ENCODE measurements at regions of chr3 and their contacts with region 1.

Region 1: DNA sequence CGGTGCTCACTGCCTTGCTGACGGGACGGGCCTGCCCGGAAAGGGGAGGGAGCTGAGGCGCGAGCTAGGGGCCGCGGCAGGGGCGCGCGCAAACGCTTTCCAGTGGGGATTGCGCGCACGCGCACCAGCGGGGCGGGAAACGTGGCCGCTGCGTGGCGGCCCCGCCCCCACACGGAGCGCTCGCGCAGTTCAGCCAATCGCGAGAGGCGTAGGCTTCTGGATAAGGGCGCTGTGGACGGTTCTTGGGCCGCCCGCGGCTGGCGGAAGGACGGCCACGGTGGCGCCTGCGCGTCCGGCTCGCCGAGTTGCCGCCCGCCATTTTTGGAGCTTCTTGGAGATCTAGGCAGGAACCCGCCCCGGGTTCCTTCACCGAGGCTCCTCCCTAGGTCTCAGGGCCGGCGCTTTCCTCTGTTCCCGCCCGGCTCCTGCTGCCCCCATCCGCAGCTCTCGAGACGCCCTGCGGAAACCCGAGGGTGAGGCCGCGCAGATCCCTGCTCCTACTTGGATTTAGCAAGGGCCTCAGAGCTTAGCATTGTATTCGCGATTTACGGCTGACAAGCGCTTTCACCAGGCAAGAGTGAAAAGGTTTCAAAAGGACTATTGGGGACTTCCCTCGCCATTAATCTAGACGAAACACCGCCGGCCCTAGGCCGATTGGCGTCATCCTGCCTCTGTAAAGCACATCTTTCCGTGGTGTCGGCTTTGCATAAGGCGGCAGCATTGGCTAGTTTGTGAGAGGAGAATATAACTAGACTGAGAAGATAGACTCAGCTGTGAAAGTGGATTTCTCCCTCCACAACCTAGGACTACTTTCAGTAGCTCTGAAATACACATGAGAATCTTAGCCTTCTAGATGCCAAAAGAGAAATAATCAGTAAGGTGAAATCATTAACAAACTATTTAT is 496 bp upstream of the STAG1 start:
- DNase-seq: peak; percentile 99
- H3K4me3 ChIP-seq: peak overlapping the region; percentile 84 to 95 (median 88)
- H3K27ac ChIP-seq: peak overlapping the region; percentile 92 to 99 (median 98)
- H3K4me1 ChIP-seq: peaks cover 0 to 42% (median 33%) of the 10 kb centered on the region in 4 donors
- H3K27me3 ChIP-seq: no peaks in the 10 kb centered on the region
- CTCF ChIP-seq: no peak
- EP300 ChIP-seq: peak in 1 of 4 donors; percentile 17
- POLR2A ChIP-seq: peak; percentile 33 to 78

Region 2: GRCh38 chr3:136196401-136197158 is 556.1 kb before region 1 on chr3:
- intact Hi-C with region 1: loop called (anchors 2 kb)
- DNase-seq: peak; percentile 100
- H3K4me3 ChIP-seq: peak overlapping the region; percentile 80 to 91 (median 83)
- H3K27ac ChIP-seq: peak overlapping the region; percentile 99 to 100 (median 100)
- H3K4me1 ChIP-seq: peaks cover 0 to 32% (median 25%) of the 10 kb centered on the region in 4 donors
- H3K27me3 ChIP-seq: no peaks in the 10 kb centered on the region
- CTCF ChIP-seq: no peak
- EP300 ChIP-seq: peak in 1 of 4 donors; percentile 44
- POLR2A ChIP-seq: peak; percentile 13 to 14

Region 3: DNA sequence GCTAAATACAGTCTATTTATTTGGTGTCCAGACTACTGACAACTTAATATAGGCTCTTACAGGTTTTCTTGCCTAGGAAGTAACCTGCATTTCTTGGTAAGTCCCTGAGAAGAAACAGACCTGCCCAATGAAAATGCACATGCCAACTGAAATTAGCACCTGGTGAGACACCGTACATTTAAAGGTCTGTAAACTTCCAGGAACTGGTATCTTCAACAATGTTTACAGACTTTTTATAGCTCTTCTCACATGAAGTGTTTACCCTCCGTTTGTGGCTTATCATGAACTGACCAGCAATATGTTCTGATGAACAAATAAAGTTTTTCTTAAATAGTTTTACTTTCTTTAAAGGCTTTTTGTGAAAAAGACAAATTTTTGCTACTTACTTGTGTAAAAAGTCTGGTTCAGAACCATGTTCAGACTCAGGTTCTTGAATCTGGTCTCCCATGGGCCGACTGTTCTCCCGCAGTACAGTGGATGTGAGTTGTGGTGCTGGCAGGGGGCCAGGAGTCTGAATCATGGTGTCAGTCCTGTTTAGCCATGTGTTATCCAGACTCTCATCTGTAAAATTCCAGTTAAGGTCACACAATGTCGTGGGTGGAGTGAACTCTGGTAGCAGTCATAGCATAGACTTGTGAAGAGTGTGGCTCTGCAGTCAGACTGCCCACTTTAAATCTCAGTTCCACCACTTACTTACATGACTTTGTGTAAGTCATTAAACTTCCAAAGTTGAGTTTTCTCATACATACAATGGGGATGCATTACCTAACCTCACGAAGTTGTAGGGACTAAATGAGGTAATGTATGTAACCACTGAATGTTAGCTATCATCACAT is 409.0 kb before region 1 on chr3:
- intact Hi-C with region 1: loop called (anchors 5 kb)
- DNase-seq: peak; percentile 95
- H3K4me3 ChIP-seq: no peak overlapping the region
- H3K27ac ChIP-seq: peak overlapping the region in 3 of 4 donors; percentile 55 to 71 (median 70)
- H3K4me1 ChIP-seq: peaks cover 0 to 21% (median 15%) of the 10 kb centered on the region in 4 donors
- H3K27me3 ChIP-seq: no peaks in the 10 kb centered on the region
- CTCF ChIP-seq: no peak
- EP300 ChIP-seq: peak in 2 of 4 donors; percentile 24 to 26
- POLR2A ChIP-seq: no peak

Region 4: DNA sequence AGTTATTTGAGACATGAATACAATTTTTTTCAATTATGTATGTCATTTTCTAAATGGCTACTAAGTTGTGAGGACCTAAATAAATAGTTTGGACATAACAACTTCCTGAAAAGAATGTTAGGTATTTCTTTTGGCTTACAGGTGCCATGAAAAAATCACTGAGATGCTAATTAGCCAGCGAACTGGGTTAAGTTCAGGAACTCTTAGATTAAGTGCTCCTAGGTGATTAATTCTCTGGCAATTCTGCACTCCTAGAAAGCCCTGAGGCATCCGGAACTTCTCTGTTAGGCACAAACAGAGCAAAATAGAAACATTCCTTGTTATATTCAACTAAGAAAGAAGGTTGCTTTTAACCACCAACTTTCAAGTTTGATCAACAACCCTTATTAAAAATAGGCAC is 192.8 kb before region 1 on chr3:
- intact Hi-C with region 1: no loop called
- DNase-seq: no peak
- H3K4me3 ChIP-seq: no peak overlapping the region
- H3K27ac ChIP-seq: no peak overlapping the region
- H3K4me1 ChIP-seq: no peaks in the 10 kb centered on the region
- H3K27me3 ChIP-seq: no peaks in the 10 kb centered on the region
- CTCF ChIP-seq: no peak
- EP300 ChIP-seq: no peak
- POLR2A ChIP-seq: no peak

Region 5: DNA sequence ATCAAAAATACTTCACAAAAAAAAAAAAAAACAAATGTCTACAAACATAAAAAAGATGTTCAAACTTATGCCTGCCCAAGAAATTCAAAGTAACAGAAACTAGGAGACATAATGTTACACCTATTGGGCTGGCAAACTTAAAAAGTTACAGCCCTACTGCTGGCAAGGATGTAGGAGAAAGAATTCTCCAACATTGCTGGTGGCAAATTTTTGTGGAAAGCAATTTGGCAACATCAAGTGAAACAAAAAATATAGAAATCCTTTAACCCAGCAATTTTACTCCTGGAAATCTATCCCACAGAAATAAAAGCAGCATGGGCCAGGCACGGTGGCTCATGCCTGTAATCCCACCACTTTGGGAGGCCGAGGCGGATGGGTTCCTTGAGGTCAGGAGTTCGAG is 73.7 kb before region 1 on chr3:
- intact Hi-C with region 1: no loop called
- DNase-seq: no peak
- H3K4me3 ChIP-seq: no peak overlapping the region
- H3K27ac ChIP-seq: no peak overlapping the region
- H3K4me1 ChIP-seq: peaks cover 0 to 45% (median 28%) of the 10 kb centered on the region in 4 donors
- H3K27me3 ChIP-seq: no peaks in the 10 kb centered on the region
- CTCF ChIP-seq: no peak
- EP300 ChIP-seq: no peak
- POLR2A ChIP-seq: no peak

Region 6: GRCh38 chr3:136818769-136819391 is 66.2 kb after region 1 on chr3 and contains the start of gene SLC35G2:
- intact Hi-C with region 1: loop called (anchors 2 kb)
- DNase-seq: peak; percentile 69
- H3K4me3 ChIP-seq: peak within 1 kb of the TSS; percentile 57 to 68 (median 62)
- H3K27ac ChIP-seq: peak within 1 kb of the TSS; percentile 59 to 84 (median 68)
- H3K4me1 ChIP-seq: peaks cover 0 to 16% (median 14%) of the 10 kb centered on the region in 4 donors
- H3K27me3 ChIP-seq: no peaks in the 10 kb centered on the region
- CTCF ChIP-seq: no peak
- EP300 ChIP-seq: no peak
- POLR2A ChIP-seq: no peak
- total RNA-seq, gene SLC35G2: 3.4 to 8.0 (median 5.3) TPM

Region 7: GRCh38 chr3:136994772-136995516 is 242.3 kb after region 1 on chr3:
- intact Hi-C with region 1: loop called (anchors 5 kb)
- DNase-seq: peak; percentile 93
- H3K4me3 ChIP-seq: no peak overlapping the region
- H3K27ac ChIP-seq: peak overlapping the region; percentile 51 to 77 (median 68)
- H3K4me1 ChIP-seq: peaks cover 0 to 19% (median 16%) of the 10 kb centered on the region in 4 donors
- H3K27me3 ChIP-seq: no peaks in the 10 kb centered on the region
- CTCF ChIP-seq: no peak
- EP300 ChIP-seq: no peak
- POLR2A ChIP-seq: no peak

Measured in sigmoid colon (tissue), 7 donors.